Sciatic nerve (tissue), 2 donors: ENCODE measurements at regions of chr10 and their contacts with region 1.

Region 1: GRCh38 chr10:84054743-84055142 is 84.6 kb upstream of the GHITM start:
- DNase-seq: no peak
- ATAC-seq: no peak

Region 2: GRCh38 chr10:83507610-83508009 is 547.1 kb before region 1 on chr10:
- intact Hi-C with region 1: loop called (anchors 5 kb)
- DNase-seq: no peak
- ATAC-seq: no peak

Region 3: DNA sequence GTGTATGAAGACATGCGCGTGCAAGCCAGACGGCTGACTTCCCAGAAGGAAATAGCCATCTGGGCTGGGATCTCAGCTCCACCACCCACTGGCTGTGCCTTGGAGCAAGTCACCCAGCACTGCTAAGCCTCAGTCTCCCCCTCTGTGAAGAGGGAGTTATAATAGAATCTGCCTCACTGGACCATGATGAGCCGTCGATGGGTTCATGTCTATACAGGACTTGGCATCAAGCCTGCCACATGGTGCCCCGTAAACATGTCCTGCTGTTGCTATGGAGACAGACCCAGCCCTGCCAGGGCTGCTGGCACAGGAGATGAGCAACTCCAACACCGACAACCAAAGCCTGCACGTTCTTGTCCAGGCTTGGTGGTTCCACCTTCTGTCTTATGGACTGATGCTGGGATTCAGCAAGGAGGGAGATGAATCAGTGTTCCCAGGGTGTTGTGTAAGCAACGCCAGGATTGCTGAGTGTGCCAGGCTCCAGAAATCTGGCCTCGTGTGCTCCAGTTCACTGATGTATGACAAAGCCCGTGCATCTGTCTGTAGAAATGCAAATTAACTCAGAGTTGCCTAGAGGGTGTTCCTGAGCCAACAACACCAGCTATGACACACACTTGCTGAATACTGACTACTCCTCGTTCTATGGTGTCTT is 124.4 kb after region 1 on chr10:
- intact Hi-C with region 1: no loop called
- DNase-seq: peak; percentile 17
- ATAC-seq: no peak